ENCODE measurements at regions of chr5 and their contacts with region 1.

Region 1: DNA sequence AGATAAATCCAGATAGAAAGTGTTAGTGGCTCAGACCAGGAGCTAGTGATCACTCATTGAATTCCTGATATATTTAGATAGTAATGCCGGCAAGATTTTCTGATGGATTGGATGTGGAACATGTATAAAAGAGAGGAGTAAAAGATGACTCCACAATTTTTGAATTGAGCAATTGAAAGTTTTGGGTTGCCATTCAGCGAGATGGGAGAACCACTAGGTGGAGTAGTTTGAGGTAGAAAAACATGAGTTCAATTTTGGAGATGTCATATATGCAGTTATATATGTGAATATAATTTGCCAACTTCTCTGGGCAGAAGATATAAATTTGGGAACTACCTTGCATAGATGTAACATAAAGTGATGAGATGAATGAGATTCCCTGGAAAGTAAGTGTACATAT is 502.5 kb upstream of the SEMA6A start:
- DNase-seq: peak; percentile 51
- H3K4me3 Mint-ChIP-seq: no peak overlapping the region
- H3K27ac Mint-ChIP-seq: no peak overlapping the region
- H3K4me1 Mint-ChIP-seq: no peaks in the 10 kb centered on the region
- H3K27me3 Mint-ChIP-seq: no peaks in the 10 kb centered on the region
- CTCF ChIP-seq: peak; percentile 53

Region 2: DNA sequence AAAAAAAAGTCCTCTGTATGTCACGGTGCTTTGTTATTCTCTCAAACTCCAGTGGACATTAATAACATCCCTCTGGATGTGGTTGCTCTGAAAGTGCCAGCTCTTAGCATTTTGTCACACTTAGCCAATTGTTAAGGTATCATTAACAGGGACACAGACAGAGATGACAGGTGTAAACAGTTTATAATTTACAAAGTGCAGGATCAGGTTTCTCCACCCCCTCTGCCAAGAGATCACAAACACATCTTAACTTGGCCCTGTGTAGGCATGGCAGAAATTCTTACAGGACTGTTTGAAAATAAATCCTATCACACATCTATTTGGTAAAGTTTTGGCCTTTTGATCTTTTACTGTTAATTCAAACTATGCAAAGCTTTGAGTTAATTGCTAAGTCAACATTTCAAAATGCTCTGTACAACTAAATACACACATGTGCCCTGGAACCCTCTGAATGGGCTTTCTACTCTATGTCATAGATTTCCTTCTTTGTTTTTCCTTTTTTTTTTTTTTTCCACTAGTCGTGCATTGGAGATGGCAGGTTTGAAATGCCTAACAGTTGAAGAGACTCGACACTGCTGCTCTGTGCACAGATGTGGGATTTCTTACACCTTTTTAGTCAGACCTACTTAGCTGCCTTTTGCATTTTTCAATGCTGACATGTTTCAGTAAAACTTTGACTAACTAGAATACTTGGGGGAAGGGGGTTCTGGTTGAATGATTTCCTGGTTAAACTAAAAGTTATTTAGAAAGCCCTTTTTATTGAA is 544.2 kb before region 1 on chr5:
- CTCF ChIA-PET with region 1: no interaction called
- POLR2A ChIA-PET with region 1: no interaction called
- intact Hi-C with region 1: no loop called
- DNase-seq: no peak
- H3K4me3 Mint-ChIP-seq: no peak overlapping the region
- H3K27ac Mint-ChIP-seq: no peak overlapping the region
- H3K4me1 Mint-ChIP-seq: no peaks in the 10 kb centered on the region
- H3K27me3 Mint-ChIP-seq: no peaks in the 10 kb centered on the region
- CTCF ChIP-seq: no peak

Region 3: GRCh38 chr5:116574367-116575325 is 502.5 kb before region 1 on chr5 and contains the start of gene SEMA6A:
- CTCF ChIA-PET with region 1: interaction called, 5 read pairs
- POLR2A ChIA-PET with region 1: no interaction called
- intact Hi-C with region 1: loop called (anchors 10 kb)
- DNase-seq: peak; percentile 94
- H3K4me3 Mint-ChIP-seq: peak within 1 kb of the TSS; percentile 93
- H3K27ac Mint-ChIP-seq: peak within 1 kb of the TSS; percentile 37
- H3K4me1 Mint-ChIP-seq: peaks cover 5% of the 10 kb centered on the region
- H3K27me3 Mint-ChIP-seq: no peaks in the 10 kb centered on the region
- CTCF ChIP-seq: peak; percentile 12
- total RNA-seq, gene SEMA6A: 1.5 and 2.1 TPM in 2 replicates

Measured in MCF 10A (cell line).